Ovary (tissue), 10 donors: ENCODE measurements at regions of chr3 and their contacts with region 1.

Region 1: DNA sequence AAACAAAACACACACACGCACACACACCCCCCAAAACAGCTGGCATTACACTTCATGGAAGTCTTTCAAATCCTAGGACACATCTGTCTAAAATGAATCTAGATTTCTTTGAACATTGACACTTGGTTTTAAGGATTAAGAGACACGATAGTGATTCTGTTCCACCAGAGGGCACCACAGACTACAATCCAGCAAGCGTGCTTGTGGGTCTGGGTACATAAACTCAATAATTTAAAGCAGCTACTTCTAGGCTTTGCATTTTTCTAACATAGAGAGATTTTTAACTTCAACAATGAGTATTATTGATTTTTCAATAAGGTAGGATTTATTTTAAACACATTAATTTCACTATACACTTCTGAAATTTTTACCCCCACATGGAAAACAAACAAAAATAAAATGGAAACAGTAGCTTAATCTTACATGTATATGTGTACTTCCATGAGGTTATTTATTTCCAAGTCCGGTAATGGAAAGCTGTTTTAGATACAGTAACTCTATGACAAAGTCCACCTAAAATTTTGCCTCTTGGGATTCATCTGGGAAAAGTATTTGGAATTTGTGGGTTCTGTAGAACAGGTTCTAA is 564.0 kb upstream of the TGFBR2 start:
- DNase-seq: peak; percentile 24 to 68 (median 38)
- H3K4me3 ChIP-seq: no peak overlapping the region
- H3K27ac ChIP-seq: no peak overlapping the region
- H3K4me1 ChIP-seq: no peaks in the 10 kb centered on the region
- H3K27me3 ChIP-seq: no peaks in the 10 kb centered on the region
- CTCF ChIP-seq: peak in 2 of 3 donors; percentile 59 to 78
- EP300 ChIP-seq: no peak
- POLR2A ChIP-seq: no peak

Region 2: GRCh38 chr3:30199096-30199759 is 156.9 kb after region 1 on chr3:
- intact Hi-C with region 1: loop called in 1 of 4 experiments (anchors 10 kb)
- DNase-seq: peak; percentile 35 to 76 (median 72)
- H3K4me3 ChIP-seq: no peak overlapping the region
- H3K27ac ChIP-seq: no peak overlapping the region
- H3K4me1 ChIP-seq: no peaks in the 10 kb centered on the region
- H3K27me3 ChIP-seq: no peaks in the 10 kb centered on the region
- CTCF ChIP-seq: peak; percentile 59 to 79 (median 65)
- EP300 ChIP-seq: no peak
- POLR2A ChIP-seq: no peak

Region 3: DNA sequence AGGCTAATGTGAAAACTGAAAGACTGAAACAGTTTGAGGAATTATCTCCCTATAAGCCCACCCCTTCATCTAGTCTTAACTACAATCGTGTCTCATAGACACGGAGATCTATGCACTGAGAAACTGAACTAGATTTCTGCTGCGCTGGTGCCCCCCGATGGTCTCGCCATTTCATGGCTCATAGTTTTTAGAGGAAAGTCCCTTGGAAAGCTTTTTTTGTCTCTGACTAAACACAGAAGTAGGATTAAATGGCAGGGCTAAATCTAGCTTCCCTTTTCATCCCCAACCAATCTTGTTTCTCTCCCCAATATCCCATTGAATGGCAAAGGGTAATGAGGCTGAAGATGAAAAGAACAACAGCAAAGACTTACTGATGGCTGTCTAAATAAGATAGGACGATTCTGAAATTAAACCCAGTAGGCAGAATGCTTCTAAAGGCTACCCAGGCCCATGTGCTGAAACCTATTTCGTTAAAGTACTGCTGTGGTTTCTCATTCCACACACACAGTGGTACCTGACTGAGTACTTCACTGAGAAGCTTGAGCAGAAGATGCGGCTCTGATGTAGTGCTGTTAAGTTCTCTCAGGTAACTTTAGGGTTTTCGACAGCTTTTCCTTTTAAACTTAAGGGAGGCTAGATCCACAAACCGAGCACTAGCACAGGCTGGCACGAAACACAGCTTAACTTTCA is 709.4 kb after region 1 on chr3:
- intact Hi-C with region 1: loop called in 1 of 4 experiments (anchors 5 kb)
- DNase-seq: peak in 4 of 5 donors; percentile 26 to 53 (median 40)
- H3K4me3 ChIP-seq: no peak overlapping the region
- H3K27ac ChIP-seq: no peak overlapping the region
- H3K4me1 ChIP-seq: no peaks in the 10 kb centered on the region
- H3K27me3 ChIP-seq: no peaks in the 10 kb centered on the region
- CTCF ChIP-seq: no peak
- EP300 ChIP-seq: no peak
- POLR2A ChIP-seq: no peak